ENCODE measurements at regions of chr18 and their contacts with region 1.

Region 1: GRCh38 chr18:54217624-54218023 is 6.8 kb downstream of the MBD2 start:
- DNase-seq: peak; percentile 68
- H3K4me3 ChIP-seq: peak overlapping the region; percentile 88
- H3K27ac ChIP-seq: peak overlapping the region; percentile 99
- H3K4me1 ChIP-seq: peaks cover 89% of the 10 kb centered on the region
- CTCF ChIP-seq: no peak

Region 2: DNA sequence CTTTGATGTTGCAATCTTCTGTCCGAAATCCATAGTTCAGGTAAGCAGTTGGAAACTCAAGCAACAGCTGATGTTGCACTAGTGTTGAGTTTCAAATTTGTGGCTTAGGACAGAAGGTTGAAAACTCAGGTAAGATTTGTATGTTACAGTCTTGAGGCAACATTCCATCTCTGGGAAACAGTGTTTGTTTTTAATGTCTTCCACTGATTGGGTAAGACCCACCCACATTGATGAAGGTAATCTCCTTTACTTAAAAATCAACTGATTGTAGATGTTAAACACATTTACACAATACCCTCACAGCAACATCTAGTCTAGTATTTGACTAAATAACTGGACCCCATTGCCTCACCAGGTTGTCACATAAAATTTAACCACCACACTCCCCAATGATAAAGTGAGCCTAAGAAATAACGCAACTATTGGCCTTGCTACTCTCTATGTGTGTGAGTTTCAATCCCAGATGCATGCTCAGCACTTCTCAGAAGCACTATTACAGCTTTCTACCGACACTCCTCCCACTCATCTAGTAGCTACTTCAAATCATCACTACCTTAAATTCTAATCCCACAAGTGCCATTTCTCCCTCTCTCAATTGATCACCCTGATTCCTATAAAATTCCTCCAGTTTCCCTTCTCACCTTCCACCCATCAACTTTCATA is 157.2 kb before region 1 on chr18:
- CTCF ChIA-PET with region 1: no interaction called
- POLR2A ChIA-PET with region 1: no interaction called
- intact Hi-C with region 1: no loop called
- DNase-seq: no peak
- H3K4me3 ChIP-seq: no peak overlapping the region
- H3K27ac ChIP-seq: no peak overlapping the region
- H3K4me1 ChIP-seq: no peaks in the 10 kb centered on the region
- CTCF ChIP-seq: no peak

Region 3: GRCh38 chr18:54263904-54264371 is 46.3 kb after region 1 on chr18:
- CTCF ChIA-PET with region 1: no interaction called
- POLR2A ChIA-PET with region 1: interaction called, 21 read pairs
- intact Hi-C with region 1: no loop called
- DNase-seq: peak; percentile 30
- H3K4me3 ChIP-seq: peak overlapping the region; percentile 30
- H3K27ac ChIP-seq: peak overlapping the region; percentile 55
- H3K4me1 ChIP-seq: peaks cover 63% of the 10 kb centered on the region
- CTCF ChIP-seq: no peak

Region 4: GRCh38 chr18:54269893-54270844 is 52.5 kb after region 1 on chr18:
- CTCF ChIA-PET with region 1: no interaction called
- POLR2A ChIA-PET with region 1: interaction called, 21 read pairs
- intact Hi-C with region 1: no loop called
- DNase-seq: peak; percentile 56
- H3K4me3 ChIP-seq: peak overlapping the region; percentile 75
- H3K27ac ChIP-seq: peak overlapping the region; percentile 91
- H3K4me1 ChIP-seq: peaks cover 44% of the 10 kb centered on the region
- CTCF ChIP-seq: peak; percentile 74

Region 5: DNA sequence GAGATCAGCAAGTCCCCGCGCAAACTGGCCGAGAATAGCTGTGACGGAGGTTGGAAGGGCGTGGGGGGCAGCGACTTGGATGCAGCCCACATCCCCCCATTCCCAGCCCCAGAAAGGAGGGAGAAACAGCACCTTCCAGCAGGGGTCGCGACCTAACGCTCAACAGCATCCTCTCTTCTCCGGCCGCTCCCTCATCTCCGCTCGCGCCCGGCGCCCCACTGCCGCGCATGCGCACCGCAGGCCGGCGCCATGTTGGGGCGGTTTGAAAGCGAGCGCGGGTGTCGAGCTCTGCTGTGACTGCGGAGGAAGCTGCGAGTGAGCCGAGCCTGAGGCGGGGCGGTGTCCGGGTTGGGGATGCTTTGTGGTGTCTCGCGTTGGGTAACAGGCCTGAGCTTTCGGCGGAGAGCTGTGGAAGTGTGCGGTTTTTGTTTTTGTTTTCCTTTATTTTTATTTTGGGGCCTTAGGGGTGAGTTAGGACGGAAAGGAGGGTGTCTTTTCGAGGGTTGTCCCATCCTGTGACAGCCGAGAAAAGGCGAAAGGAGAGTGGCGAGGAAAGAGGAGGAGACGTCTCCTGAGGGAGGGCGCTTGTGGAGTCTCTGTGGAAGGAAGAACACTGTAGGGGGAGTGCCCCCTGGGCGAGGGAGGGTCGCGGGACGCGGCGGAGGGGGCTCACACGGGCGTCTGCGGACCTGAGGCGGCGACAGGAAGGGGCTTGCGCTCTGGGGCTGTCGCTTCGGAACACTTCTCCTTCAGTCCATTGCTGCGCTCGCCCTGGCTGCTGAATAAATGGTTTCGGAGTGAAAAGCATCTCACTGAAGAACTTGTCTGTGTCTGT is 140.3 kb after region 1 on chr18 and contains the starts of genes C18orf54 and STARD6:
- CTCF ChIA-PET with region 1: interaction called, 3 read pairs
- POLR2A ChIA-PET with region 1: interaction called, 10 read pairs
- intact Hi-C with region 1: loop called (anchors 2 kb)
- DNase-seq: peak; percentile 88
- H3K4me3 ChIP-seq: peak within 1 kb of the TSS; percentile 88
- H3K27ac ChIP-seq: peak within 1 kb of the TSS; percentile 82
- H3K4me1 ChIP-seq: peaks cover 21% of the 10 kb centered on the region
- CTCF ChIP-seq: peak; percentile 65
- total RNA-seq, gene C18orf54: 4.9 and 5.4 TPM in 2 replicates
- total RNA-seq, gene STARD6: not detected in 2 replicates

Measured in OCI-LY7 (cell line).